ENCODE measurements at regions of chr16 and their contacts with region 1.

Region 1: DNA sequence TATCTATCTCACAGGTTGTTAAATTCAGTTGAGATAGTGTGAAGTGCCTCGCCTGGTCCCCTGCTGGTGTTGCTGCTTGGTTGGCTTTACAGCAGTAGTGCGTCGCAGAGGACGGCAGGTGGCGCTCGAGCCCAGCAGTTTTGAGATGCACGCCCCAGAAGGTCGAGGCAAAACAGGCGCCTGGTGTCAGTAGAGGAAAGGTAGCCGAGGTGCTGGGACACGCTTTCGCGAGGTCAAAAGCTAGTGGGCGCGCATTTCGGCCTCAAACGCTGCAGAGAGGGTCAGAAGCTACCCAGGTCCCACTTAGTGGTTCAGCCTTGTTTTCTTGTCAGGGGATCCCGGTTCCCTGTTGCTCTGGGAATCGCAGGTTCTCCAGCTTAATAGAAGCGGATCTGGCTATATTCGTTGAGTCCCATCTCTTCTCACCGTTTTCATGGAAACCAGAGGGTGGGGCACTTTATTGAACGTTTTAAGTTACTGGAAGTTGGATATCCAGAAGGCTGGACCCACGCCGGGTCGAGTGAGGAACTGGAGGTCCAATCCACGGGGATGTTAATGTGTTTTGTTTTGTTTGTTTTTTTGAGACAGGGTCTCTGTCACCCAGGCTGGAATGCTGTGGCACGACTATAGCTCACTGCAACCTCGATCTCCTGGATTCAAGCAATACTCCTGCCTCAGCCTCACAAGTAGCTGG is 10.3 kb upstream of the ZFP90 start:
- DNase-seq: peak; percentile 95
- H3K4me3 Mint-ChIP-seq: peak overlapping the region; percentile 53
- H3K27ac Mint-ChIP-seq: no peak overlapping the region
- H3K4me1 Mint-ChIP-seq: peaks cover 18% of the 10 kb centered on the region
- H3K27me3 Mint-ChIP-seq: no peaks in the 10 kb centered on the region

Region 2: DNA sequence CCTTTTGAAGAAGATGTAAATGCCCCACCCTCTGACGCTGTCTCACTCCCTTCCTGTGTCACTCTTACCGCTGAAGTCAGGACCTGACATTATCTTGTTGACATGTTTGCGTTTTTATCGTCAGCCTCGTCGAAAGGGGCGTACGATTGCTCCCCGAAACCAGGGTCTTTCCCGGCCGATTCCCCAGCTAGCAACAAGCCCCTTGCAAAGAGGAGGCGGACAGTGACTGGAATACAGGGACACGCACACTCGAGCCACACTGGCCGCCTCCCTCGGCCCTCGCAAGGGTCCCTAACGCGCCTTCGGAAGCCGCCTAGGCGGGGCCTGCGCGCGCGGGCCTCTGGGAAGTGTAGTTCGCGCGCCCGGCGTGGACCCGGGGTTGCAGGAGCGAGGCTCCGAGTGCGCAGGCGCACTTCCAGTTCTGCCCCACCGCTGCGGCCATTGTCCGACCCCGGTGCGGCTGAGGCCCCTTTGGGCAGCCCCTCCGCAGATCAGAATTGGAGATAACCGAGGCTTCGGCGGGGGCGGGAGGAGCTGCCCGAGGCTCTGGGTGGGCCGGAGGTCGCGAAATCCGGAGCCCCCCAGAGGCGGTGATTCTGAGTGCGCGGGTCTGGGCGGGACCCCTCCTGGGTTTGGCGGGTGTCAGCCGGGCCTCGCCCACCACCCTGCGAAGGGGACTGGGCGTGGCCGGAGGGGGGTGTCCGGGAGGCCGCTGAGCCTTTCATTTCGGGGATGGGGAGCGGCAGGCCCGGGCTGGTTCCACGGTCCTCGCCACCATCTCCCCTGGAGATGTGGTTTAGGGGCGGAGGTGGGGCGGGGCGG is 10.3 kb after region 1 on chr16 and contains the start of gene ZFP90:
- CTCF ChIA-PET with region 1: interaction called, 14 read pairs
- intact Hi-C with region 1: loop called (anchors 1 kb)
- DNase-seq: peak; percentile 85
- H3K4me3 Mint-ChIP-seq: peak within 1 kb of the TSS; percentile 91
- H3K27ac Mint-ChIP-seq: peak within 1 kb of the TSS; percentile 96
- H3K4me1 Mint-ChIP-seq: peaks cover 19% of the 10 kb centered on the region
- H3K27me3 Mint-ChIP-seq: no peaks in the 10 kb centered on the region
- total RNA-seq, gene ZFP90: 27.5 to 30.2 TPM

Region 3: DNA sequence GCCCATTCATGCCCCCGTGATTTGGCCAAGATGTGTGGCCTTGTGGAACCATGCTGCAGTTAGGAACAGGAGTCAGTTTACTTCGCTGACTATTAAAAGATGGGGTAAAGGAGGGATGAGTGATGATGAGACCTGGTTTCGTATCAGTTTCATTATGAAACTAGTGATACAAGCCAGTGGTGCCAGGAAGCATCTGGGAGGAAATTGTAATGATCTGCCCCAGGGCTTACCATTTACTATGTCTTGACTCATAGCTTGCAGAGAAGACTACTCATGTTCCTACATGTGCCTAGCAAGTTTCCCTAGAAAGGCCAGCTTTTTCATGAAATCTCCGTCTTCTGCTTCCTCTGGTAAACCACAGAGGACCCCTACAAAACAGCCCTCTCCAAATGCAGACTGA is 139.4 kb after region 1 on chr16:
- CTCF ChIA-PET with region 1: interaction called, 11 read pairs
- intact Hi-C with region 1: loop called (anchors 1 kb)
- DNase-seq: peak; percentile 77
- H3K4me3 Mint-ChIP-seq: no peak overlapping the region
- H3K27ac Mint-ChIP-seq: peak overlapping the region; percentile 77
- H3K4me1 Mint-ChIP-seq: peaks cover 24% of the 10 kb centered on the region
- H3K27me3 Mint-ChIP-seq: peaks cover 7% of the 10 kb centered on the region

Region 4: GRCh38 chr16:68800257-68800875 is 271.5 kb after region 1 on chr16:
- CTCF ChIA-PET with region 1: interaction called, 5 read pairs
- intact Hi-C with region 1: loop called (anchors 1 kb)
- DNase-seq: peak; percentile 86
- H3K4me3 Mint-ChIP-seq: no peak overlapping the region
- H3K27ac Mint-ChIP-seq: peak overlapping the region; percentile 30
- H3K4me1 Mint-ChIP-seq: peaks cover 3% of the 10 kb centered on the region
- H3K27me3 Mint-ChIP-seq: no peaks in the 10 kb centered on the region

Region 5: DNA sequence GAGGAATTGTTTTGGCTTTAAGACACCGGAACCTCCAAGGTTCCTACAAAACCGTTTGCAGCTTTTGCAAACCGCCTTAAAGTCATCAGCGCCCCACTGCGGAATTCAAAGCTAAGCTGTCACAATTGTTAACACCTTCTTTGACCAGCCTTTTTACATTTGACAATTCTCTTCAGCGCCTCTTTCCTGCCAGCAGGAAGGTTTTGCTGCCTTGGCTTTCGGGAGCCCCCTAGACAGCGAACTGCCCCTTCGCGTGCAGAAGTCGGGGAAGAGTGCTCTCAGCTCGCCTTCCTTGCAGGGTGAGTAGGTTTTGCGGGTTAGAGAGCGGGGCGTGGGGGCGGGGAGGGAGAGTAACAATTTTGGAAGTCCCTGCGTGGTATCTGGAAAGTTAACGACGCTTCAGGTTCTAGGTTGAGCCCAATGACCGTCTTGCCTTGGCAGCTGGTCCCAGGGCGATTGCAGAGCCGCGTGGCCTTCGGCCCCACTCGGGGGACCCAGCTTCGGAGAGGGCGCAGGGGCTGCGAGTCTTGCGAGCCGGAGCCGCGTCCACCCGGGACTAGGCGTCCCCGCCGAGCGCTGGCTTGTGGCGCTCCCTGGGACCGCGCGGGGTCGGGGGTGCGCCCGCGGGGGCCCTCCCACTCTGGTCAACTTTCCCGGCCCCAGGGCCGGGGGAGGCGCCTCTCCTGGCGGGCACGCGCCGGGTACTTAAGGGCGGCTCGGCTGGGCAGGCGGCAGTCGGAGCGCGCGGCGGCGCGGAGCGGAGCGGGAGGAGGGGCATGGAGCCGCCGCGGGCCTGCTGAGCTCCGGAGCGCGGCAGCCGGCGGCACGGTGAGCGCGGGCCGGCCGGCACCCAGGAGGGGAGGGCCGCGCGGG is 576.9 kb after region 1 on chr16 and contains the start of gene HAS3:
- CTCF ChIA-PET with region 1: interaction called, 4 read pairs
- intact Hi-C with region 1: loop called (anchors 5 kb)
- DNase-seq: peak; percentile 60
- H3K4me3 Mint-ChIP-seq: peak within 1 kb of the TSS; percentile 79
- H3K27ac Mint-ChIP-seq: peak within 1 kb of the TSS; percentile 26
- H3K4me1 Mint-ChIP-seq: peaks cover 21% of the 10 kb centered on the region
- H3K27me3 Mint-ChIP-seq: peaks cover 26% of the 10 kb centered on the region
- total RNA-seq, gene HAS3: 0.20 to 0.31 TPM

Region 6: DNA sequence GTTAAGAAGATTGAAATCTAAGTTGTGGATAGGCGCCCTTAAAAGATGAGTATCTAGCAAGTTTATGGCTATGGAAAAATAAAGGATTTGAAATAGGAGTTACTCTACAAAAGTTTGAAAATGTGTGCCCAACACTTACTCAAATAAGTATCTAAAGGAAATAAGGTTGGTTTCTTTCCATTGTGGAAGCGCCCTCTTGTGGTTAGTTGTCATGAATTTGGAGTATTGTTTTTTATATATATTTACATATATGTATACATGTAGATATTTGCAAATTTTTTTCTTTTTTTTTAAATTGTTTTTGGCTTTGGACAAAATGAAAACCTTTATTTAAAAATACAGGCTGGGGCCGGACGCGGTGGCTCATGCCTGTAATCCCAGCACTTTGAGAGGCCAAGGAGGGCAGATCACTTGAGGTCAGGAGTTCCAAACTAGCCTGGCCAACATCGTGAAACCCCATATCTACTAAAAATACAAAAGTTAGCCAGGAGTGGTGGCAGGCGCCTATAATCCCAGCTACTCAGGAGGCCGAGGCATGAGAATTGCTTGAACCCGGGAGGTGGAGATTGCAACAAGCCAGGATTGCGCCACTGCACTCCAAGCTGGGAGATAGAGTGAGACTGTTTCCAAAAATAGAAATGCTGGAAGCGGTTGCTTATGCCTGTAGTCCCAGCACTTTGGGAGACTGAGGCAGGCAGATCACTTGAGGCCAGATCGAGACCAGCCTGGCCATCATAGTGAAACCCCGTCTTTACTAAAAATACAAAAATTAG is 758.3 kb after region 1 on chr16:
- CTCF ChIA-PET with region 1: no interaction called
- intact Hi-C with region 1: loop called (anchors 2 kb)
- DNase-seq: peak; percentile 68
- H3K4me3 Mint-ChIP-seq: no peak overlapping the region
- H3K27ac Mint-ChIP-seq: no peak overlapping the region
- H3K4me1 Mint-ChIP-seq: peaks cover 2% of the 10 kb centered on the region
- H3K27me3 Mint-ChIP-seq: no peaks in the 10 kb centered on the region